HEK293 (cell line): ENCODE measurements at regions of chr17 and their contacts with region 1.

Region 1: GRCh38 chr17:8222630-8223356 is 12.4 kb upstream of the AURKB start:
- H3K4me3 ChIP-seq: peak overlapping the region; percentile 78
- H3K27ac ChIP-seq: peak overlapping the region; percentile 70
- H3K4me1 ChIP-seq: peaks cover 12% of the 10 kb centered on the region
- CTCF ChIP-seq: no peak

Region 2: GRCh38 chr17:8173056-8173870 is 49.5 kb before region 1 on chr17:
- CTCF ChIA-PET with region 1: no interaction called
- POLR2A ChIA-PET with region 1: interaction called, 24 read pairs
- H3K4me3 ChIP-seq: peak overlapping the region; percentile 53
- H3K27ac ChIP-seq: peak overlapping the region; percentile 89
- H3K4me1 ChIP-seq: peaks cover 10% of the 10 kb centered on the region
- CTCF ChIP-seq: no peak

Region 3: DNA sequence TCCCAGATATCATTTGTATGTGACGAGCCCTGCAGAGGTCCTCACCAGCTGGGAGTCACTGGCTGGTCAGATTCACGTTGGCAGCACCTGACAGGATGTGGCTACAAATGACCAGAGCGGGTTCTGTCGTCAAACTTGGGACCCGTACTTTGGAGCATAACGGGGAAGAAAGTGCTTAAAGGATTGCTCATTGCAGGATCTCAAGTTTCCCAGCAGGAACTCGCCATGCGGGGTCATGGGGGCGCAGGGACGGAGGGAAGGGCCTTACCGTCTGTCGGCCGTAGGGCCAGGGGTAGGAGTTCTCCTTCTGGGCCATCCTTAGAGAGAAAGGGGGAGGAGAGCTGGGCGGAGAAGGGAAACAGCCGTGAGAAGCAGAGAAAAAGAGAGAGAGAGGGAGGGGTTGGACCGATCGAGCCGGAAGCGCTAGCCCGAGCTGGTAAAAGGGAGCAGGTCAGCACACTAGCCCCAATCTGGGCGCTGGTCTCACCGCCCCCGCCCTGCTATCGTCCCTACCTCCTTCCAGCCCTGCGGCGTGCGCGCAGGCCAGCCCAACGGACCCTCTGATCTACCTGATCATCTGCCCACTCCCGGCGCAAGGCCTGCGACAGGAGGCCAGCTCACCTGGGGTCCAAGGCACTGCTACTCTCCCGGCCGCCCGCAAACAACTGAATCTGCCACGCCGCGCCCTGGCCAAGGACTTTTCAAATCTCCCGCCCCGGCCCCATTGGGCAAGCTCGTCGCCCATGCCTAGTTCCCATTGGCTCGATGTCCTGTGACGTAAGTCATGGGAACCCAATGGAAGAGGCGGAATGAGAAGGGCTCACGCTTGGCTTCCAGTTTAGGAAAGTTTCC is 12.7 kb before region 1 on chr17 and contains the start of gene AURKB:
- CTCF ChIA-PET with region 1: interaction called, 10 read pairs
- POLR2A ChIA-PET with region 1: interaction called, 218 read pairs
- H3K4me3 ChIP-seq: peak within 1 kb of the TSS; percentile 76
- H3K27ac ChIP-seq: peak within 1 kb of the TSS; percentile 91
- H3K4me1 ChIP-seq: peaks cover 8% of the 10 kb centered on the region
- CTCF ChIP-seq: no peak

Region 4: DNA sequence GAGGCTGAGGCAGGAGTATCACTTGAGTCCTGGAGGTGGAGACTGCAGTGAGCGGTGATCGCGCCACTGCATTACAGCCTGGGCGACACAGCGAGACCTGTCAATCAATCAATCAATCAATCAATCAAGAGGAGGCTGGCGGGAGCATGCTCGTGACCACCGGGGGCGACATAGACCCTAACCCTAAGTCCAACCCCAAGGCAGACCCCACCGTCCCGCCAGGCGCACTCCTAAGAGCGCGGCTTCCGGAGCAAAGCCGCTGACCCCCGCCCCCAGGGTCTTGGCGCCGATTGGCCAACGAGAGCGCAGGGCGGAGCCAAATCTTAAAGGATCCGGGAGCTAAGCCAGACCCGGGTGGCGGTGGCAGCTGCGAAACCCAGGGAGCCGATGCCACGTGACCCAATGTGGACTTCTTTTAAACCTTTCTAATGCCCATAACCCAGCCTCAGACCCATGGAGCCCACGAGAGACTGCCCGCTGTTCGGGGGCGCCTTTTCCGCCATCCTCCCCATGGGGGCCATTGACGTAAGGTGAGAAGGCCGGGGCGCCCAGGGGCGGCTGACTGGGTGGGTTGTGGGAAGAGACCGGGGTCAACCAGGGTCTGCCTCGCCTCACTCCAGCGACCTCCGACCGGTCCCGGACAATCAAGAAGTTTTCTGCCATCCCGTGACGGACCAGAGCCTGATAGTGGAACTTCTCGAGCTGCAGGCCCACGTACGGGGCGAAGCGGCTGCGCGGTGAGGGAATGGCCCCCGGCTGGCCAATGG is 65.7 kb after region 1 on chr17 and contains the start of gene RANGRF:
- CTCF ChIA-PET with region 1: no interaction called
- POLR2A ChIA-PET with region 1: interaction called, 10 read pairs
- H3K4me3 ChIP-seq: peak within 1 kb of the TSS; percentile 76
- H3K27ac ChIP-seq: peak within 1 kb of the TSS; percentile 79
- H3K4me1 ChIP-seq: peaks cover 9% of the 10 kb centered on the region
- CTCF ChIP-seq: peak; percentile 51; the same call in 1 of the 2 replicates

Region 5: GRCh38 chr17:8300627-8301242 is 77.9 kb after region 1 on chr17:
- CTCF ChIA-PET with region 1: interaction called, 19 read pairs
- POLR2A ChIA-PET with region 1: interaction called, 27 read pairs
- H3K4me3 ChIP-seq: no peak overlapping the region
- H3K27ac ChIP-seq: no peak overlapping the region
- H3K4me1 ChIP-seq: no peaks in the 10 kb centered on the region
- CTCF ChIP-seq: peak; percentile 81

Region 6: GRCh38 chr17:8447799-8448198 is 225.0 kb after region 1 on chr17:
- CTCF ChIA-PET with region 1: no interaction called
- POLR2A ChIA-PET with region 1: no interaction called
- H3K4me3 ChIP-seq: no peak overlapping the region
- H3K27ac ChIP-seq: no peak overlapping the region
- H3K4me1 ChIP-seq: no peaks in the 10 kb centered on the region
- CTCF ChIP-seq: no peak